GM12878 (cell line): ENCODE measurements at regions of chr20 and their contacts with region 1.

Region 1: DNA sequence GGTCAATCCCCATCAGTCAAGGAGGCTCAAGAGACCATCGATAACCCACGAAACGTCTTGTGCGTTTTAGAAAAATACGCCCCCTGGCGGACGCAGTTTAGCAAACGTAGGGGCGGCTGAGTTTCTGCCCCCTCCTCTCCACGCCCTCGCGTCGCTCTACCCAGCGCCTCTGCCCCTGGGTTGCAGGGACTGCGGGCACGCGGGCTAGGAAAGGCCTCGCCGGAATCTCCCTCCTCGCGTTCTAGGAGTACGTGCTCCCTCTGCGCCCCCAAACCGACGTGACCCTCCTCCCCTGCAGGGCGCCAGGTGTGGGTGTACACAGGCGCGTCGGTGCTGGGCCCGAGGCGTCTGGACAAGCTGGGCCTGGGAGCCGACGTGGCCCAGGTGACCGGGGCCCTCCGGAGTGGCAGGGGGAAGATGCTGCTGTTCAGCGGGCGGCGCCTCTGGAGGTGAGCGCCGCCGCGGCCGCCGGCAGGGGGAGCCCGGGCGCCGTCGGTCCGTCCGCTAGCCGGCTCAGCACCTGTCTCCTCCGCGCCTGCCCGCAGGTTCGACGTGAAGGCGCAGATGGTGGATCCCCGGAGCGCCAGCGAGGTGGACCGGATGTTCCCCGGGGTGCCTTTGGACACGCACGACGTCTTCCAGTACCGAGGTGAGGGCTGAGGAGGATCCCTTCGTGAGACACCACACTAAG is 5.3 kb downstream of the MMP9 start:
- DNase-seq: no peak
- ATAC-seq: peak; percentile 94
- H3K4me3 ChIP-seq: no peak overlapping the region
- H3K27ac ChIP-seq: no peak overlapping the region
- H3K4me1 ChIP-seq: peaks cover 10% of the 10 kb centered on the region
- H3K27me3 ChIP-seq: peaks cover 11 to 12% of the 10 kb centered on the region in 2 experiments; a peak in 3 of 4 replicates
- CTCF ChIP-seq: peak; percentile 60 to 83 (median 63)
- EP300 ChIP-seq: no peak
- POLR2A ChIP-seq: no peak
- RAD21 ChIP-seq: peak; percentile 51

Region 2: DNA sequence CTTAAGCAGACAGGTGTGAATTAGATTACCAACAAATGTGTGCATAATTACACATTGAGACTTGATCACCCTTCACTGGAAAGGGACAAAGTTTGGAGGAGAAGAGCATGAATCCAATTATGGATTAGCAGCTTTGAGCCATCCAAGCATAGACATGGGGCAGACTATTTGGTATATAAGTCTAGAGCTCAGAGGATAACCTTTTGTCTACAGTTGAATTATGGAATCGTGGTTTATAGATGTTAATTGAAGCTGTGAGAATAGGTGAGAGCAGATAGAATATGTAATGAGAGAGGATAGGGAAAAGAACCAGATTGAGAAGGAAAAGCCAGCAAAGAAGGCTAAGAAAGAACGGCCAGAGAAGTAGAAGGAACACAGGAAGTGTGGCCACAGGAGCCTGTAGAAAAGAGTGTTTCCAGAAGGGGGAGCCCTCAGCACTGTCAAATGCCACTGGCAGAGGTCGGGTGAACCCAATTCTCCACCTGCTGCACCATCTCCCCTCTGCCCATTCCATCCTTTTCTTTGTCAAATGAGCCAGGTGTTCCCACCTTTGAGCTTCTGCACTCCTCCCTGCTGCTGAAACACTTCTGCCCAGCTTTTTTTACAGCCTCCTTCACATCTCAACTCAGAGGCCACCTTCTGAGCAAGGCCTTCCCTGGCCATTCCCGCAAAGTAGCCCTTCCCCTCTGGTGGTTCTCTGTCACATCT is 214.9 kb before region 1 on chr20:
- CTCF ChIA-PET with region 1: interaction called, 26 read pairs
- POLR2A ChIA-PET with region 1: no interaction called
- RAD21 ChIA-PET with region 1: interaction called, 5 read pairs
- SMC1A ChIA-PET with region 1: interaction called, 4 read pairs
- in situ Hi-C with region 1: no loop called
- intact Hi-C with region 1: no loop called
- DNase-seq: no peak
- ATAC-seq: peak; percentile 99
- H3K4me3 ChIP-seq: no peak overlapping the region
- H3K27ac ChIP-seq: no peak overlapping the region
- H3K4me1 ChIP-seq: no peaks in the 10 kb centered on the region
- H3K27me3 ChIP-seq: no peaks in the 10 kb centered on the region
- CTCF ChIP-seq: peak; percentile 69 to 78 (median 73)
- EP300 ChIP-seq: no peak
- POLR2A ChIP-seq: no peak
- RAD21 ChIP-seq: peak; percentile 66

Region 3: GRCh38 chr20:45993197-45993951 is 20.6 kb before region 1 on chr20:
- CTCF ChIA-PET with region 1: interaction called, 190 read pairs
- POLR2A ChIA-PET with region 1: no interaction called
- RAD21 ChIA-PET with region 1: interaction called, 66 read pairs
- SMC1A ChIA-PET with region 1: interaction called, 11 read pairs
- in situ Hi-C with region 1: no loop called
- intact Hi-C with region 1: no loop called
- DNase-seq: no peak
- ATAC-seq: peak; percentile 98
- H3K4me3 ChIP-seq: no peak overlapping the region
- H3K27ac ChIP-seq: no peak overlapping the region
- H3K4me1 ChIP-seq: peaks cover 18% of the 10 kb centered on the region
- H3K27me3 ChIP-seq: no peaks in the 10 kb centered on the region; a peak in 1 of 4 replicates
- CTCF ChIP-seq: no peak
- EP300 ChIP-seq: no peak
- POLR2A ChIP-seq: no peak
- RAD21 ChIP-seq: no peak

Region 4: DNA sequence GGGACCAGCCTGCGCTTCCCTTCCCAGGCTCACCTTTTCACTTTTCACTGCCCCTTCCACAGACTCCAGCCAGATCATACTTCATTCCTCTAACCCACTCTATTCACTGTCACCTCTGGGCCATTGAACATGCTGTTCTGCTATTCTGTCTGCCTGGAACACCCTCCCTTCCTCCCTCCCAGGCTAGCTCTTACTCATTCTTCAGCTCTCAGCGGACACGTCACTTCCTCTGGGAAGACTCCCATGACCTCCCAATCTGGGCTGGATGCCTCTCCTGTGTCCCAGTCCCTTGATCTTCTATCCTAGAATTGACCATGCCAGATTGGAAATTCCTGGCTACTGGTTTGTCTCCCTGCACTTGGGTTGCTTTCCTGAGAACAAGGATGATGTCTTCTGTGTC is 20.1 kb after region 1 on chr20:
- CTCF ChIA-PET with region 1: no interaction called
- POLR2A ChIA-PET with region 1: no interaction called
- RAD21 ChIA-PET with region 1: no interaction called
- SMC1A ChIA-PET with region 1: no interaction called
- in situ Hi-C with region 1: no loop called
- intact Hi-C with region 1: no loop called
- DNase-seq: no peak
- ATAC-seq: no peak
- H3K4me3 ChIP-seq: no peak overlapping the region
- H3K27ac ChIP-seq: no peak overlapping the region
- H3K4me1 ChIP-seq: no peaks in the 10 kb centered on the region
- H3K27me3 ChIP-seq: peaks cover 3 to 4% of the 10 kb centered on the region in 2 experiments
- CTCF ChIP-seq: no peak
- EP300 ChIP-seq: no peak
- POLR2A ChIP-seq: no peak
- RAD21 ChIP-seq: no peak

Region 5: DNA sequence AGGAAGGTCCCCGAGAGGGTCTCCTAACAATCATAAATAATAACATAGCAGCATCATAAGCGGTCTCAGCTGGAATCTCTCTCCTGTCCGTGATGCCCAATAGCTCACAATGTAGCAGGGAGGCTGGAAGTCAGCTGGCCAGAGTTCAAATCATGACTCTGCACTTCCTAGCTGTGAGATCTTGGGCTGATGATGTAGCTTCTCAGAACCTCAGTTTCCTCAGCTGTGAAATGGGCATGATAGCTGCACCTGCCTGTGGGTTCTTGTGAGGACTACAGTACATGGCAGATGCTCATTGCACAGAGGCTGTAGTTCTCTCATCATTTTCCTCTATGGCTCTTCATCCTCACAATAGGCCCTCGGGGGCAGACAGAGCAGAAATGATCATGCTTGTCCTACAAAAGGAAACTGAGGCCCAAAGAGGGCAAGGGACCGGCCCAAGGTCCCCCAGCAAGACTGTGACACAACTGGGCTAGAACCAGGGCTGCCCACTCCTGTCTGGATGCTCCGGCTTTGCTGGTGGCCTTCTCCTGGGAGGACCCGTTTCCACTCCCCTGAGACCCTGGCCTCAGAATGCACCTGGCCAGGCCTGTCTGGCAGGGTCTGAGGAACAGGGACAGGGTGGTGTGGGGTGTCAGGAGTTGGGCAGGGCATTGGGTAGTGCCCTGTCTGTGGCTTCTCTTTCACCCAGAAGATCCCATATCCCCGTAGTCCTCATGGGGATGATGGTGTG is 32.8 kb after region 1 on chr20:
- CTCF ChIA-PET with region 1: no interaction called
- POLR2A ChIA-PET with region 1: no interaction called
- RAD21 ChIA-PET with region 1: no interaction called
- SMC1A ChIA-PET with region 1: no interaction called
- in situ Hi-C with region 1: no loop called
- intact Hi-C with region 1: no loop called
- DNase-seq: no peak
- ATAC-seq: no peak
- H3K4me3 ChIP-seq: no peak overlapping the region
- H3K27ac ChIP-seq: no peak overlapping the region
- H3K4me1 ChIP-seq: no peaks in the 10 kb centered on the region
- H3K27me3 ChIP-seq: peaks cover 0 to 5% of the 10 kb centered on the region in 2 experiments; a peak in 3 of 4 replicates
- CTCF ChIP-seq: no peak
- EP300 ChIP-seq: no peak
- POLR2A ChIP-seq: no peak
- RAD21 ChIP-seq: no peak

Region 6: DNA sequence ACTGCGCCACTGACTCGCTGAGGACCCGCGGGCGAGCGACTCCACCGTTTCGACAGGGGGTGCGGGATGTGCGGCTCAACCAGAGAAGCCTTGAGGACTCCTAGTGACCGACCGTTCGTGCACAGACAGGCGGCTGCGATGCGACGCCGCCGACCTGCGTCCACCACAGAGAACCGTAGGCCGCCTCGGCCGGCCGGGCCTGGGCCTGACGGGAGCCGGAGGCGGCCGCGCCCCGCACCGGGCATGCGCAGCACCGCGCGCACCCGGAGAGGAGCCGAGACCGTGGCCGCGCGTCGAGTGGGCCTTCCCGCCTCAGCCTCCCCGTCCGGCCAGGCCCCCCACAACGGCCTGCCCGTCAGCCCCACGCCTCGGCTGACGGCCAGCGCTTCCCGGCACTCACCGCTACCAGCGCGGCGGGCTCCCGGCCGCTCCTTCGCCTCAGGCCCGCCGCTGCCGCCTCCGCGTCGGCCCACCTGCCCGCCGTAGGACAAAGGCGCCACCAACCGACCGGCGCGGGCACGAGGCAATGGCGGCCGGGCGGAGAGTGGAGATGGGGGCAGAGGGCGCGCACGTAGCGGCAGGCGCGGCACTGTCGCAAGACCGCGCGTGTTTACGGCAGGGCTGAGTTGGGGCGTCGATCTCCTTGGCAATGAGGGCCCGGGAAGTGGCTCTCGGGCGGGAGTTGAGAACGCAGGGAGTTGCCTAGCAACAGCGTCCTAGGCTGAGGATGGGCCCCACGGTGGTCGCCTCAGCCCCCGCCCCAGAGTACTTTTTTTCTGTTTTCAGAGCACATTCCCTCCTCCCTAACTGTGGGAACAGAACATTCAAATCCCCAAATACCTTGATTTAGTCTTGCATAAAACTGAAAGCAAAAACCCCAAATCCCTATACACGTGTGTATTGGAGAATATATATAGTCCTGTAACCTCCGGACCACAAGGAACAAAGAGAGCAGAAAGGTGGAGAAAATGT is 75.7 kb after region 1 on chr20 and contains the start of gene NCOA5:
- CTCF ChIA-PET with region 1: interaction called, 17 read pairs
- POLR2A ChIA-PET with region 1: no interaction called
- RAD21 ChIA-PET with region 1: interaction called, 4 read pairs
- SMC1A ChIA-PET with region 1: interaction called, 5 read pairs
- in situ Hi-C with region 1: no loop called
- intact Hi-C with region 1: no loop called
- DNase-seq: peak; percentile 84
- ATAC-seq: peak; percentile 91
- H3K4me3 ChIP-seq: peak within 1 kb of the TSS; percentile 80
- H3K27ac ChIP-seq: peak within 1 kb of the TSS; percentile 94
- H3K4me1 ChIP-seq: peaks cover 3% of the 10 kb centered on the region; the same call in 1 of the 2 replicates
- H3K27me3 ChIP-seq: no peaks in the 10 kb centered on the region
- CTCF ChIP-seq: peak; percentile 16 to 49 (median 19); a peak in 3 of 6 replicates
- EP300 ChIP-seq: no peak
- POLR2A ChIP-seq: peak; percentile 96
- RAD21 ChIP-seq: peak; percentile 25; the same call in 1 of the 2 replicates
- polyA plus RNA-seq, gene NCOA5: 7.7 to 8.8 TPM

Region 7: GRCh38 chr20:46174469-46175128 is 160.6 kb after region 1 on chr20:
- CTCF ChIA-PET with region 1: interaction called, 16 read pairs
- POLR2A ChIA-PET with region 1: no interaction called
- RAD21 ChIA-PET with region 1: no interaction called
- SMC1A ChIA-PET with region 1: interaction called, 3 read pairs
- in situ Hi-C with region 1: no loop called
- intact Hi-C with region 1: loop called (anchors 2 kb)
- DNase-seq: no peak
- ATAC-seq: peak; percentile 98
- H3K4me3 ChIP-seq: no peak overlapping the region
- H3K27ac ChIP-seq: no peak overlapping the region
- H3K4me1 ChIP-seq: no peaks in the 10 kb centered on the region
- H3K27me3 ChIP-seq: peaks cover 5 to 12% of the 10 kb centered on the region in 2 experiments; a peak in 3 of 4 replicates
- CTCF ChIP-seq: peak; percentile 51 to 81 (median 79)
- EP300 ChIP-seq: no peak
- POLR2A ChIP-seq: no peak
- RAD21 ChIP-seq: peak; percentile 56; the same call in 1 of the 2 replicates

Region 8: DNA sequence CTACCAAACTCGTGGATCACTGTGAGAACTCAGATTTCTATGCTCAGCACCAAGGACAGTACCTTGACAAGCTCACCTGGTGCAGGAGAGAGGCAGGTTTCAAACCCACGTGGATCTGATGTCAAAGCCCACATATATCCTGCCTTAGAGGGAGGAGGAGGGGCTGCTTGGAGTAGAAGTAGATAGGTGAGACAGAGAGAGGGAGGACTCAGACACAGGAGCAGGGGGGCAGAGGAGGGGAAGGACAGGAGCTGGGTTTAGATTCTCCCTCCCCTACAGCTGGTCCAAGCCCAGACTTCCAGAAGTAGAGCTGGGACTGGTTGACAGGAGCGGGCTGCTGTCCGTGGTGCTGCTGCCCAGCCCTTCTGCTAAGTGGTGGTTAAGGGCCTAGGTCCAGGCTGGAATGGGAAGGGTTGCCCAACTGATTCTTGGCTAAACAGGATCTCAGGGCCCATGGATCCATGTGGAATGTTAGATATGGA is 216.9 kb after region 1 on chr20:
- CTCF ChIA-PET with region 1: no interaction called
- POLR2A ChIA-PET with region 1: no interaction called
- RAD21 ChIA-PET with region 1: no interaction called
- SMC1A ChIA-PET with region 1: no interaction called
- in situ Hi-C with region 1: no loop called
- intact Hi-C with region 1: no loop called
- DNase-seq: no peak
- ATAC-seq: no peak
- H3K4me3 ChIP-seq: no peak overlapping the region
- H3K27ac ChIP-seq: no peak overlapping the region
- H3K4me1 ChIP-seq: no peaks in the 10 kb centered on the region
- H3K27me3 ChIP-seq: no peaks in the 10 kb centered on the region; a peak in 1 of 4 replicates
- CTCF ChIP-seq: no peak
- EP300 ChIP-seq: no peak
- POLR2A ChIP-seq: no peak
- RAD21 ChIP-seq: no peak